ENCODE measurements at regions of chr5 and their contacts with region 1.

Region 1: DNA sequence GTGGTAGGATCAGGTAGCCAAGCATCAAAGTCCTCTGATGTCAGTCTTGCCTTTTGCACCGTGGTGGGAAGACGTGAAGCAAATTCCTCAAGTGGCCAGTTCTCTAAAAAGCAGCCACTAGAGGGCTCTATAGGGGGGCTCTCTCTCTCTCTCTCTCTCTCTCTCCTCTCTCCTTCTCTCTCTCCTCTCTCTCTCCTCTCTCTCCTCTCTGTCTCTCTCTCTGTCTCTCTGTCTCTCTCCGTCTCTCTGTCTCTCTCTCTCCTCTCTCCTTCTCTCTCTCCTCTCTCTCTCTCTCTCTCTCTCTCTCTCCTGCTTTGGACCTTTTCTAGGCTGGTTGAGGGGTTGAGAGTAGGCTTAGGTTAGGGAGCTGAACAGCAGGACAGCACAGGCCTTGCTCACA is 13.9 kb upstream of the OSMR start:
- DNase-seq: peak; percentile 46
- H3K4me3 ChIP-seq: no peak overlapping the region
- H3K27ac ChIP-seq: peak overlapping the region; percentile 86
- H3K4me1 ChIP-seq: peaks cover 38% of the 10 kb centered on the region
- H3K27me3 ChIP-seq: no peaks in the 10 kb centered on the region
- CTCF ChIP-seq: peak; percentile 35 to 54

Region 2: DNA sequence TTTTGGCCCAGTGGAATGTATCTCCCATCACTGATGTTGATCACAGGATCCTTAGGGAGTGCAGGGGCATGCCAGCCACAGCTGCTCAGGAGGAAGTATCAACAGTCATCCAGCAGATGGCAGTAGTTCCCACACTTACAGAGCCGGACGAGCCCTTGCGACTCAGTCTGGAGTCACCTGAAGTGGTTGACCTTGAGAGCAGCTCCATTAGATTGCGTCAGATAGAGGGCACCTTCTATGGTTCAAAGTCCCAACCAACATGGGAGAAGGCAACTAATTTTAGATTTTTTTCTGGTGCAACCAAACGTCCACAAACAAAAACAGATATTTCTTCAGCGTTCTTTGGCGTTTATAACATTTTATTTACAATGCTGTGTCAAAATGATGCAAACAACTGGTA is 449.0 kb before region 1 on chr5:
- CTCF ChIA-PET with region 1: interaction called, 11 read pairs
- dilution Hi-C with region 1: no loop called
- in situ Hi-C with region 1: no loop called
- intact Hi-C with region 1: no loop called
- DNase-seq: peak; percentile 50
- H3K4me3 ChIP-seq: no peak overlapping the region
- H3K27ac ChIP-seq: no peak overlapping the region
- H3K4me1 ChIP-seq: no peaks in the 10 kb centered on the region
- H3K27me3 ChIP-seq: peaks cover 3% of the 10 kb centered on the region
- CTCF ChIP-seq: peak; percentile 86 to 92

Region 3: DNA sequence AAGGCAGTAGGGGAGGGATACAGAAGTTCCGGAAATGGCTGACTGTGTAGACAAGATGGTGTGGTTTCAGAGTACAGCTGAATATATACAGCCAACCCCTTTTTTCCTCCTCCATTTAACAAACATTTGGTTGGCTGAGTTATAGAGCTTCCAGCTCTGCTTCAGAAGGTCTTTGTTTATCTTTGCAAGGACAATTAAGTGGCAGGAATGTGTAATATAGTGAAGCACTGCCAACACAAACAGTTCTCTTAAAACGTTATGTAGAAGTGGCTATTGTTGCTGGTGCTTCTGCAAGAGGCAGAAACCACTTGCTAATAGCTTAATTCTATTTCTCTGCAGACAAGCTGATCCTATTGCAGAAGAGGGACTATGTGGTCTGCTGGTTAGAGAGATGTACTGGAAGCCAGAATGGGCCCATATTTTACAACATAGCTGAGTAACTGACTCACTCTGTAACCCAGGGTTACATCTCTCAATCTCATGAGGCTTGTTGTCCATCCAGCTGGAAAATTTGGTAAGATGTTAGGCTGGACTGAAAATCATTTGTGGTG is 48.8 kb before region 1 on chr5:
- CTCF ChIA-PET with region 1: no interaction called
- dilution Hi-C with region 1: no loop called
- in situ Hi-C with region 1: no loop called
- intact Hi-C with region 1: no loop called
- DNase-seq: peak; percentile 42
- H3K4me3 ChIP-seq: no peak overlapping the region
- H3K27ac ChIP-seq: no peak overlapping the region
- H3K4me1 ChIP-seq: peaks cover 10% of the 10 kb centered on the region
- H3K27me3 ChIP-seq: no peaks in the 10 kb centered on the region
- CTCF ChIP-seq: no peak

Region 4: DNA sequence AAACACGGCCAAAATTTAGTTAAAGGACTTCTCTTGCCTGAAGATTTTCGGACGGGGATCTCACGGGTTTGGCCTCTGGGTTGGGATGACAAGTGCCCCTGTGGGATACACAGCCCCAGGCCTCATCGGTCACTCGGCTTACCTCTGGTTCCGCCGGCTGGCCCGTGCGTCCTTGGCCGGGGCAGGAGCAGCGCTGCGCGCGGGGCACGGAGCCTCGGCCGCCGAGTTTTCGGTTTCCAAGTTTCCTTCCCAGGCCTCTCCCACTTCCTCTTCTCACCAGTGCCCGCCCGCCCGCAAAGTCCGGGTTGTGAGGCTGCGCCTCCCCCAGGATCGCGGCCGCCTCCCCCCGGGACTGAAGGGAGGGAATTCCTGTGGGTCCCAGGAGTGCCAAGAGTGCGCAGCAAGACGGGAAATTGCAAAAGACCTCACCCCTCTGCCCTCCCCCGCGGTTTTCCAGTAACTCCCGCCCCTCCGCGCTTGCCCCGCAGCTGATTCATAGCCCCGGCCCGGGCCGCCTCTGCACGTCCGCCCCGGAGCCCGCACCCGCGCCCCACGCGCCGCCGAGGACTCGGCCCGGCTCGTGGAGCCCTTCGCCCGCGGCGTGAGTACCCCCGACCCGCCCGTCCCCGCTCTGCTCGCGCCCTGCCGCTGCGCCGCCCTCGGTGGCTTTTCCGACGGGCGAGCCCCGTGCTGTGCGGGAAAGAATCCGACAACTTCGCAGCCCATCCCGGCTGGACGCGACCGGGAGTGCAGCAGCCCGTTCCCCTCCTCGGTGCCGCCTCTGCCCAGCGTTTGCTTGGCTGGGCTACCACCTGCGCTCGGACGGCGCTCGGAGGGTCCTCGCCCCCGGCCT is 13.8 kb after region 1 on chr5 and contains the start of gene OSMR:
- CTCF ChIA-PET with region 1: interaction called, 4 read pairs
- dilution Hi-C with region 1: no loop called
- in situ Hi-C with region 1: no loop called
- intact Hi-C with region 1: loop called (anchors 1 kb)
- DNase-seq: peak; percentile 98
- H3K4me3 ChIP-seq: peak within 1 kb of the TSS; percentile 96 to 98 (median 97)
- H3K27ac ChIP-seq: peak within 1 kb of the TSS; percentile 100
- H3K4me1 ChIP-seq: peaks cover 17% of the 10 kb centered on the region
- H3K27me3 ChIP-seq: no peaks in the 10 kb centered on the region
- CTCF ChIP-seq: no peak
- total RNA-seq, gene OSMR: 97.7 to 111 TPM

Region 5: GRCh38 chr5:38871790-38872551 is 40.1 kb after region 1 on chr5:
- CTCF ChIA-PET with region 1: interaction called, 3 read pairs
- dilution Hi-C with region 1: no loop called
- in situ Hi-C with region 1: no loop called
- intact Hi-C with region 1: loop called (anchors 5 kb)
- DNase-seq: peak; percentile 99
- H3K4me3 ChIP-seq: no peak overlapping the region
- H3K27ac ChIP-seq: peak overlapping the region; percentile 99
- H3K4me1 ChIP-seq: peaks cover 43% of the 10 kb centered on the region
- H3K27me3 ChIP-seq: no peaks in the 10 kb centered on the region
- CTCF ChIP-seq: no peak

Region 6: DNA sequence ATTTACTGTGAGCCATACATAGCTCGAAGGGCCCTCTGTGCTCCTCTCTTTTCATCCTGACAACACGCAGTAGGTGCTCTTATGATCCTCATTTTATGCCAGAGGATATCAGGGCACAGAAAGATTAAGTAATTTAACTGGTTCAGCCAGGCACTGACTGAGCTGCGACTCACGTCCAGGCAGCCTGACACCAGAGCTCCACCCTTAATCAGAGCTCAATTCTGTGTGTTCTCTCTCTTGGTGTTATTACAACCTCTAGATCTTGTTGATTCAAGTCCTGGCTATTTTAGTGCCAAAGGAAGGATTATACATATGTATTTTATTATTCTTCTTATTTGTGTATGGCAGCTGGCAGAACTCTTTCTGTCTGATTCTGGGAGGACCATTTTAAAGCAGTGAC is 73.6 kb after region 1 on chr5:
- CTCF ChIA-PET with region 1: no interaction called
- dilution Hi-C with region 1: no loop called
- in situ Hi-C with region 1: no loop called
- intact Hi-C with region 1: loop called (anchors 5 kb)
- DNase-seq: peak; percentile 77
- H3K4me3 ChIP-seq: no peak overlapping the region
- H3K27ac ChIP-seq: no peak overlapping the region
- H3K4me1 ChIP-seq: peaks cover 5% of the 10 kb centered on the region
- H3K27me3 ChIP-seq: no peaks in the 10 kb centered on the region
- CTCF ChIP-seq: no peak

Region 7: DNA sequence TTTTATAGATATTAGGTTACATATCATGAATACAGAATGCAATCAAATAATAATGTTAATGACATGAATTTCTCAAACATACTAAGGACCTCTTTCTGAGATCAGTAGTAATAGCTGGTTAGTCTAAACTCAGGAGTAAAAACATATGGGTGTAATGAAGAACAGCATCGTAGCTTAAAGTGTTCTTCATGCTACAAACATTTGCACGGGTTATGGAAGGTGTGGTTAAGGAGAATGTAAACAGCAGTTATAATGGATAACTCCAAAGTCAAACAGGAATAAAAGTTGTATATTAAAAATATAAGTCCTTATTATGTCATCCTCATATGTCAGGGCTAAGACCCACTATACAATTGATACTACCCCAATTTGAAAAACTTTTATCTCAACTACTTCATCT is 129.8 kb after region 1 on chr5:
- CTCF ChIA-PET with region 1: no interaction called
- dilution Hi-C with region 1: no loop called
- in situ Hi-C with region 1: no loop called
- intact Hi-C with region 1: no loop called
- DNase-seq: no peak
- H3K4me3 ChIP-seq: no peak overlapping the region
- H3K27ac ChIP-seq: no peak overlapping the region
- H3K4me1 ChIP-seq: no peaks in the 10 kb centered on the region
- H3K27me3 ChIP-seq: no peaks in the 10 kb centered on the region
- CTCF ChIP-seq: no peak

Measured in mammary epithelial cell (primary cell).